ENCODE measurements at regions of chr6 and their contacts with region 1.

Region 1: GRCh38 chr6:46419576-46420002 is 71.7 kb downstream of the RCAN2 start:
- H3K4me3 Mint-ChIP-seq: no peak overlapping the region
- H3K27ac Mint-ChIP-seq: no peak overlapping the region
- H3K4me1 Mint-ChIP-seq: peaks cover 7% of the 10 kb centered on the region
- H3K27me3 Mint-ChIP-seq: peaks cover 5% of the 10 kb centered on the region

Region 2: DNA sequence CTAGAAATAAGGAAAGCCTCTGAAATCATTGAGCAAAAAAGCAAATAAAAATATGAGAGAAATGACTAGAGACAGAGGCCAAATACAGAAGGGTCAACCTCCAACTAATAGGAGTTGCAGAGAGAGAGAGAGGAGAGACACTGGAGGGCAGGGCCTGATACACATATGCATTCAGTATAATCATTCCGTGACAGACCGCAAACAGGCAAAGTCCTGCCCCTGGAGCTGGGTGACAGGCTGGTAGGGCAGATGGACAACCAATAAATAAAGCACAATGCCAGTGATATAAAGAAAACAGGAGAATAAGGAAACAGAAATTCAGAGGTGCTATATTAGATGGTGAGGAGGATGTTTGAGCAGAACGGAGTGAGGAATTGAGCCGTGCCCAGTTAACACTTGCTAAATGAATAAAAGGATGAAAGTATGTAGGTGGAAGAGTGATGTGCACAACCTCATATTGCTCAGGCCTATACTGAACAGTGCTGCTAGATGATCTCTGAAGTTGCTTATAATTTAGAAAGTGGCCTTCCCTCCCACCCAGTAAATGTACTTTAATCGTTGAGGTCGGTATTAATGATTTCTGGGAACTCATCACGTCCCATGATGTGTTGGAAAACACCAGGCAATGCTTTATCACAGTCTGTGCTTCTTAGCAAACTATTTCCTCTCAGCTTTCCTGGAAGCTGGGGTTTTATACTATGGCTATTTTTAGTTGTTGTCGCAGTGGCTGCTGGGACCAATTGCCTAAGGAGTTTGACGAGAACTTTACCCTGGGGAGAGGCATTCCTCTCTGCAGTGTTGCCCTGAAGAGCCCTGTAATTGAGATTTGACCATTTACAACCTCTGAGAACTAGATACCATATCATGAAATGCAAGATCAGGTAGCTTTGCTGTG is 366.3 kb before region 1 on chr6:
- intact Hi-C with region 1: no loop called
- H3K4me3 Mint-ChIP-seq: no peak overlapping the region
- H3K27ac Mint-ChIP-seq: no peak overlapping the region
- H3K4me1 Mint-ChIP-seq: peaks cover 15% of the 10 kb centered on the region
- H3K27me3 Mint-ChIP-seq: peaks cover 1% of the 10 kb centered on the region

Region 3: GRCh38 chr6:46347669-46348068 is 71.9 kb before region 1 on chr6:
- intact Hi-C with region 1: no loop called
- H3K4me3 Mint-ChIP-seq: no peak overlapping the region
- H3K27ac Mint-ChIP-seq: no peak overlapping the region
- H3K4me1 Mint-ChIP-seq: no peaks in the 10 kb centered on the region
- H3K27me3 Mint-ChIP-seq: no peaks in the 10 kb centered on the region

Region 4: DNA sequence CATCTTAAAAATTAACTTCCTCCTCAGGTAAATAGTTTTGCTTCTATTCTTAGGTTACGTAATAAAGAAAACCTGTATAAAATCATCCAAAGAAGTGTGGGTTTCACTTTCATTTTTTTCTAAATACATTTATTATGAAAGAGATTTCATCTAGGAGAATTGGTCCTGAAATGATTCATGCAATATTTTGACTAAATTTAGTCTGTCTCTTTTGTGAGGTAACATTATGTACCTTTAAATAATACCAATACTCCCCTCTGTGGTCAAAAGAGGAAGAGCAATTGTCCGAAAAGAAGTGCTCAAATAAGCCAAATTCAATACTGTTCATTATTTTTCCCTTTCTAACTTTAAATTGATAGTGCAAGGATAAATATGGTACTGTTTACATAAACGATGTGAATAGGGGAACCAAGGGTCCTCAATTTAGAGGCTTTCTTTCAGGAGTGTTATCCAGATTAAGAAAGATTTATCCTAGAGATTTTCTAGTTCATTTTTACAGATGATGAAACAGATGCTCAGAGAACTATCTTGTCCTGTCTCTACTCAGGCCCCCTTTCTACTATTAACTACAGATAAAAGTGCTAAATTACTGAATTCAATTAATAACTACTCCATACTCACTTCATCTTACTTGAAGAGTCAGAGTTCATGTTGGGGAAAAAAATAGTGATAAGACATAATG is 206.8 kb after region 1 on chr6:
- intact Hi-C with region 1: loop called (anchors 2 kb)
- H3K4me3 Mint-ChIP-seq: no peak overlapping the region
- H3K27ac Mint-ChIP-seq: no peak overlapping the region
- H3K4me1 Mint-ChIP-seq: no peaks in the 10 kb centered on the region
- H3K27me3 Mint-ChIP-seq: no peaks in the 10 kb centered on the region

Region 5: DNA sequence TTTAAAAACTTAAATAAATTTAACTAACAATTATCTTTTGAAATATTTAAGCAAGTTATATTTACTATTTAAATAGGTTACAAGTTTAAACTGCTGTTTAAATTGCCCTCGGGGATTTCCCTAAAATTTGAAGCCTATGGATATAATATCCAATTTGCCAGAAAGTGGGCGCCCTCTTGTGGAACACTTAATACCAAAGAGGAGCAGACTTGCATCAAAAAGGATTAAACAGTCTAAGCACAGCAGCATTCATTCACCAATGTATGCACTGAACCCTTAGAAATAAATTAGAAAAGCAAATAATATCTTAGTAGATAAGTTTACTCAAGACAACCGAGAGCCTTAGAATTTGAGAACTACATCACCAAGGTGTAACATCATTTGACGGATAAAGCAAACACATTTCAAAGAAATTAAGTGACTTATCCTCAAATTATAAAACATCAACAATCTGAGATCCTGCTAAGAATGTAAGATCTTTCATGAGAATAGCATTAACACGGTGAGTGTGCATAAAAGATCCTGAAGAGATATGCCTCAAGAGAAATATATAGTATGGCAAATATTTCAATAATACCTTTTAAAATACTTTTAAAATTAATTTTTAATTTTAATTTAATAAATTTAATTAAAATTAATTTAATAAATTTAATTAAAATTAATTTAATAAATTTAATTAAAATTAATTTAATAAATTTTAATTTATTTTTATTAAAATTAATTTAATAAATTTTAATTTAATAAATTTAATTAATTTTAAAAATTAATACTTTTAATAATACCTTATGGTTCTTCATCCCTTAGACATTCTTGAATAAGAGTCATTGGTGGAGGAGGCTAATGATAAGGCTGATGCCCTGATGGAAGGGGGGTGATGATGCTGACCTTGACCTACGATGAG is 362.1 kb after region 1 on chr6:
- intact Hi-C with region 1: loop called (anchors 5 kb)
- H3K4me3 Mint-ChIP-seq: no peak overlapping the region
- H3K27ac Mint-ChIP-seq: no peak overlapping the region
- H3K4me1 Mint-ChIP-seq: peaks cover 14% of the 10 kb centered on the region
- H3K27me3 Mint-ChIP-seq: no peaks in the 10 kb centered on the region

Region 6: DNA sequence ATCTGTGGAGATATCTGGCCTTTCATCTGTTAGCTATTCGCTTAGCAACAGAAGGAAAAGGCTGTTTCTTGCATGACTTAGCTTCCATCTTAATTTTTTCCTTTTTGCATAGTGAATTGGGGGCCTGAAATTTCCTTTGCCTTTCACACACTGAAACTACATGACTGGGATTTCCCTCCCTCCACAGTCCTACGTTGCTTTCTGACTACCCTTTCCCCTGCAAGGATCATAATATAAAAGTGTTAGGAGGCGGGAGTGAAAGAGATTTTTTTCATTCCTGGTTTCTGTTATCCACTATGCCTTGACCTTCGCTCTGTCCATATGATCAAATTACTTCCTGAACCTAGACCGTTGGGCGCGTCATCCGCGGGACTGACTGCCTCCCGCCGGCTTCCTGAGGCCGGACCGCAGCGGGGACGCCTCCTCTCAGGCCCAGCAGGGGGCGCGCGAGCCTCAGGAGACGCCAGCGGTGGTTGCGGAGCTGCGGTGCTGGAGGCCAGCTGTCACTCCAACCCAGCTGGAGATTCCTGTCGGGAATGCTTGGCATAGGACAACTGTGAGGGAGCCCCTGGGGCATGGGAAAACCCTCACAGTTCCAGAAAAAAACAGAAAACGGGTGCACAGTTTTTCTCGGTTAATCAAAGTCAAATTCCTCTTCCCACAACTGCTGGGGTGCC is 429.2 kb after region 1 on chr6:
- intact Hi-C with region 1: loop called (anchors 10 kb)
- H3K4me3 Mint-ChIP-seq: peak overlapping the region; percentile 30
- H3K27ac Mint-ChIP-seq: no peak overlapping the region
- H3K4me1 Mint-ChIP-seq: peaks cover 11% of the 10 kb centered on the region
- H3K27me3 Mint-ChIP-seq: peaks cover 13% of the 10 kb centered on the region

Region 7: DNA sequence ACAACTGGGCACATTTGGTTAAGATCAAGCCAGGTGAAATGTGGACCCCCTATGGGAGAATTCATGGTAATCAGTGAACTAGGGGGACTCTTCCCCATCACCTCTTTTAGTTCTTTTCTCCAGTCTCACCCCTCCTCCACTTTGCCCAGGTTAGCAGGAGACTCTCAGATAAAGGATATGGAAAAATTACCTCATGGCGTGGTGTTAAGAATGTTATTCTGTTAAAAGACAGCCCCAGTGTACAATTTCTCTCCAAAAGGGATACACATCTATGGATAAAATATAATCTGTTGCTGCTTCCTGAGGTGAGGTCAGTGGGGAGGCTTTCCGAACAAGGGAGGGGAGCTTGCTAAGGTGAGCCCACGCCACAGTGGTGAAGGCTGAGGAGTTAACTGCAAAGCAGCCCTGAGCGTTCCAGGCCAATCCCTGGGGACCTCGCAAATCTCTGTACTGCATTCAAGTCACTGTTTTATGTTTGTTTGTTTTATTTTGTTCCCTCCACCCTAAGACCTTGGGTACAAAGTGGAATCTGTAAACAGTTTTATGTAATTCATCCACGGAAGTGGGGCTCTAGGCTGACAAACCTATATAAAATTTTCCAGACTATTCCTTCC is 570.5 kb after region 1 on chr6:
- intact Hi-C with region 1: loop called (anchors 2 kb)
- H3K4me3 Mint-ChIP-seq: no peak overlapping the region
- H3K27ac Mint-ChIP-seq: no peak overlapping the region
- H3K4me1 Mint-ChIP-seq: peaks cover 7% of the 10 kb centered on the region
- H3K27me3 Mint-ChIP-seq: no peaks in the 10 kb centered on the region

Region 8: GRCh38 chr6:47047479-47048407 is 628.2 kb after region 1 on chr6:
- intact Hi-C with region 1: loop called (anchors 5 kb)
- H3K4me3 Mint-ChIP-seq: no peak overlapping the region
- H3K27ac Mint-ChIP-seq: no peak overlapping the region
- H3K4me1 Mint-ChIP-seq: peaks cover 7% of the 10 kb centered on the region
- H3K27me3 Mint-ChIP-seq: peaks cover 6% of the 10 kb centered on the region

Measured in dendritic cell treated with granulocyte-macrophage colony-stimulating factor and Interleukin-4, amounts not matched to agents 40 ng/mL and 50 ng/mL, for 4 days (primary cell).